Transverse colon (tissue), 4 donors: ENCODE measurements at regions of chr18 and their contacts with region 1.

Region 1: DNA sequence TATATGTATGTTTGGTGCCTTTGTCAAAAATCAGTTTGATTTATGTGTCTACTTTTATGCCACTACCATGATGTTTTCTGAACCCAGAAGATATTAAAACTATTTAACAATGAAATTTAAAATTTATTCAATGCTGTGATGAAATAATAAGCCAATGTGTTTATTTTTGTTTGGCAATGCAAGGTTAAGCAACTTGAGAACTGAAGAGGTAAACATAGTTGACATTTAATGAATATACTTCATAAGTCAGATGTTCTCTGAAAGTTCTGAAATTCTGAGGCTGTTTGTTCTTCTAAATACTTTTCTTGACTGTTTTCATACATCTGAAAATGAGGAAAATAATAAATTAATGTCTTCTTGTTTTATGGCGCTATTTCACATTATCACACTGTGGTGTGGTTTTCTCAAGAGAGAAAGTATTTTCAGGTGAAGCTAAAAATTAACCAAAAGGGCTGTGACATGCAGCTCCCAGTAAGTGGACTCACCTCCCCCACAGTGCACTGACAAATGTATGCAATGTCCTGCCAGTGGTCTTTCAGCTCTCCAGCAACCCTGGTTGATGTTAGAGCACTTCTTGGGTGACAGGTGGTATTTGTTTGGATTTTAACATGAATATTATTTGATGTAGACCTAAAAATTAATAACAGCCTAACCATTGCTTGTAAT is 863.6 kb upstream of the SALL3 start:
- DNase-seq: no peak
- H3K4me3 ChIP-seq: no peak overlapping the region
- H3K27ac ChIP-seq: no peak overlapping the region
- H3K4me1 ChIP-seq: no peaks in the 10 kb centered on the region
- H3K27me3 ChIP-seq: no peaks in the 10 kb centered on the region
- CTCF ChIP-seq: no peak
- EP300 ChIP-seq: no peak
- POLR2A ChIP-seq: no peak

Region 2: DNA sequence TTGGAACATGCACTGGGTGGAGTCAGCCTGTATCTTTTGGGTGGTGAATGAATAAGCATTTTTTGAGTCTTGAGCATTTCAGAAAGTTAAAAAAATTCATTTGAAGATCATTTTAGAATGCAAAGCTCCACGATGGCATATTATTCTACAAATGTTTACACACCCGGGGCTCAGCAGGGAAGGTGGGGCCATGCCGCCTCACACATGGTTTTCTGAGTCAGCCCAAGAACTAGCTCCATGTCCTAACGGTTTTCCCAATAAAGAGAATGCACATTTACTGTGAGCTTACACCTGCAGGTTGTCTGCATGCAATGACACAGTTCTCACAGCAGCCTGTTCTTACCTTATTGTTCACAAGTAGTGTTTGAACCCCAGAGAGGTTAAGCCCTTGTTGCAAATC is 196.1 kb before region 1 on chr18:
- in situ Hi-C with region 1: no loop called
- intact Hi-C with region 1: loop called (anchors 5 kb)
- DNase-seq: no peak
- H3K4me3 ChIP-seq: no peak overlapping the region
- H3K27ac ChIP-seq: no peak overlapping the region
- H3K4me1 ChIP-seq: no peaks in the 10 kb centered on the region
- H3K27me3 ChIP-seq: no peaks in the 10 kb centered on the region
- CTCF ChIP-seq: no peak
- EP300 ChIP-seq: no peak
- POLR2A ChIP-seq: no peak

Region 3: DNA sequence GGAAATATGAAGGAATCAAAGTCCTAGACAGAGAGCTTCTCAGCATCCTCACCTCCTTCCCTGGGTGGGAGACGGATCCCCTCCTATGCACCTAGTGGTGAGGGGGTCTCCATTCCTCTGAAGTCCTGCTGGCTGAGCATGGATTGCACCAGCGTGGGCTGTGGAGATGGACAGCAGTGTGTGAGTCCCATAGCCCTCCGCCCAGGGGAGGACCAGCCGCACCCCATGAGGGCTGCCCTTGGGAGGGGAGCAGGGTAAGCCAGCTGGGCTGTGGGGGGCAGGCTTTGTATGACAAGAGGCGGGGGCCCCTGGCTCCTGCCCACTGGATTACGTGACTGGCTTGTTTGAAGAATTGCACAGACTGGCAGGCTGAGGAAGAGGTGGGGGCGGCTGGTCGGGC is 98.2 kb before region 1 on chr18:
- in situ Hi-C with region 1: no loop called
- intact Hi-C with region 1: no loop called
- DNase-seq: no peak
- H3K4me3 ChIP-seq: no peak overlapping the region
- H3K27ac ChIP-seq: no peak overlapping the region
- H3K4me1 ChIP-seq: no peaks in the 10 kb centered on the region
- H3K27me3 ChIP-seq: no peaks in the 10 kb centered on the region
- CTCF ChIP-seq: no peak
- EP300 ChIP-seq: no peak
- POLR2A ChIP-seq: no peak